ENCODE measurements at regions of chr1 and their contacts with region 1.

Region 1: DNA sequence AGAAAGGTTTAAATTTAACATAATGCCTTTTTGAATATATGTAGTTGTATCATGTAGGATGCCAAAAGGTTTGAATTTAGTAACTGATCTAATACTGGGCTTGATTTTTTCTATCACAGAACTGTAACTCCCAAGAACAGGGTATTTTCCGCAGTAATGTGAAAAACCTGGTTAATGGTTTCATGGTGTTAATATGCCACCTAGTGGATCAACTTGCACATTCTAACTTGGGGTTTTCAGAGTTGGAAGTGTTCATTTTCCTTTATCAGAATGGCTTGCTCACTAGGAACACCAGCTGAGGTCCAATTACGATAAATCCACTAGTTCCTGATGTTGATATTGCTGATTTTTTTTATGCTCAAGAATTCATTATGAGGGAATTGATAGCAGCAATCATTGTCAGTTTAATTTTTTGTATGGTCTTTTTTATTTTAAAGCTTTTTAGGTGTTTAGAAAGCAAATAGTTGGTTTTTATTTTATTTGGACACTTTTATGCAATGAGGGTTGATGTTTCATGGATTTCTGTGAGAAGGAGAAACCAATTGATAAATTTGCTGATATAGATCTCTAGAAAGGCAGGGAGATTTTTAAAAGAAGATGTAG is 157.2 kb downstream of the PLA2G4A start:
- DNase-seq: no peak
- H3K4me3 ChIP-seq: no peak overlapping the region
- H3K27ac ChIP-seq: no peak overlapping the region
- H3K27me3 ChIP-seq: no peaks in the 10 kb centered on the region
- CTCF ChIP-seq: peak; percentile 69 to 98 (median 84)

Region 2: DNA sequence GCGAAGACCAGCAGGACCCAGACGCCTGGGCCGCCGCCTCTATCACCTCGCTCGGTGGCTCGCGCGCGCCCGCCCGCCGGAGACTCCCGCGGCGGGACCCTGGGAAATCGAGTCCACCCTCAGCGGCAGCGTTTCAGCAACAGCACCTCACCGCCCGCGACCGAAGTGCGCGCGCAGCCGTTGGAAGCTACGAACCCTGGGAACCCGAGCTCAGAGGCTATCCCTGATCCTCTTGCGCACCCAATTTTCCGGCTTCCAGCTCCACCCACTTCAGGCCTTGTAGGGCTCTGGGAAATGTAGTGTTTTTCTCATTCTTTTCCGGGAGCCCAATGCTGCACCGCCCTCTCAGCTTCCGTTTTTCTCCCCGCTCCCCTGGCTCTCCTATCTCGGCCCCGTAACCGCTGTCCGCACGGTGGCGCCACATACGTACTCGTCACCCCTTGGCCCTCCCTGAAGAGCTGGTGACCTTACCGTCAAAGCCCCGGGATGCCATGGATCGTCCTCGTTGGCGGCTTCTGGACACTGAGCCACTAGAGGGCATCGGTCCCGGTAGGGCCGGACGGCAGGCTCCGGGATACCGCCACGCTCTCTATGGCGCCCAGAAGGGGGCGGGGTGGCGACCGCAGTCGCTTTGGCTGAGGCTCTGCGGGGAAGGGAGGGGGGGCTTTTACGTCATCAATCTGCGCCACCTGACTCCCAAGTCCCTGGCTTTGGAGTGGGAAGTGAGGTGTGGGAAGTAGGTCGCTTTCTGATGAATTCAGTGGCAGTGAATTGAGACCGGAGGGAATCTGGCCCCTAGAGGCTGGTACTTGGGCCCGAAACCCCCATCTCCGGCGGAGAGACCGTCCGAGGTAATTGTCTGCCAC is 610.7 kb before region 1 on chr1 and contains the starts of genes ODR4 and TPR:
- intact Hi-C with region 1: loop called in 1 of 2 experiments (anchors 10 kb)
- DNase-seq: peak; percentile 94 to 97 (median 96)
- H3K4me3 ChIP-seq: peak within 1 kb of the TSS; percentile 63 to 99 (median 92)
- H3K27ac ChIP-seq: peak within 1 kb of the TSS; percentile 86 to 99 (median 97)
- H3K27me3 ChIP-seq: no peaks in the 10 kb centered on the region
- CTCF ChIP-seq: peak; percentile 72 to 98 (median 91)
- total RNA-seq, gene ODR4: 19.6 to 46.4 (median 29.3) TPM
- total RNA-seq, gene TPR: 56.1 to 92.2 (median 74.2) TPM

Region 3: GRCh38 chr1:186404454-186405051 is 581.4 kb before region 1 on chr1:
- intact Hi-C with region 1: loop called in 1 of 2 experiments (anchors 2 kb)
- DNase-seq: no peak
- H3K4me3 ChIP-seq: no peak overlapping the region
- H3K27ac ChIP-seq: no peak overlapping the region
- H3K27me3 ChIP-seq: no peaks in the 10 kb centered on the region
- CTCF ChIP-seq: peak; percentile 46 to 85 (median 75)

Region 4: GRCh38 chr1:186482661-186483255 is 503.2 kb before region 1 on chr1:
- intact Hi-C with region 1: loop called (anchors 5 kb)
- DNase-seq: peak in 8 of 10 donors; percentile 6 to 59 (median 48)
- H3K4me3 ChIP-seq: no peak overlapping the region
- H3K27ac ChIP-seq: no peak overlapping the region
- H3K27me3 ChIP-seq: no peaks in the 10 kb centered on the region
- CTCF ChIP-seq: peak; percentile 48 to 92 (median 77)

Region 5: GRCh38 chr1:186958520-186958919 is 27.5 kb before region 1 on chr1:
- intact Hi-C with region 1: no loop called
- DNase-seq: no peak
- H3K4me3 ChIP-seq: no peak overlapping the region
- H3K27ac ChIP-seq: no peak overlapping the region
- H3K27me3 ChIP-seq: no peaks in the 10 kb centered on the region
- CTCF ChIP-seq: no peak

Measured in dorsolateral prefrontal cortex (tissue), 120 donors.